Calu3 (cell line): ENCODE measurements at regions of chr7 and their contacts with region 1.

Region 1: GRCh38 chr7:78284945-78285344 is 486.4 kb downstream of the PHTF2 start:
- DNase-seq: no peak
- H3K4me3 Mint-ChIP-seq: no peak overlapping the region
- H3K27ac Mint-ChIP-seq: no peak overlapping the region
- H3K4me1 Mint-ChIP-seq: no peaks in the 10 kb centered on the region
- H3K27me3 Mint-ChIP-seq: peaks cover 23% of the 10 kb centered on the region
- CTCF ChIP-seq: no peak

Region 2: GRCh38 chr7:78379148-78379547 is 94.2 kb after region 1 on chr7:
- CTCF ChIA-PET with region 1: no interaction called
- intact Hi-C with region 1: no loop called
- DNase-seq: no peak
- H3K4me3 Mint-ChIP-seq: no peak overlapping the region
- H3K27ac Mint-ChIP-seq: no peak overlapping the region
- H3K4me1 Mint-ChIP-seq: no peaks in the 10 kb centered on the region
- H3K27me3 Mint-ChIP-seq: no peaks in the 10 kb centered on the region
- CTCF ChIP-seq: no peak

Region 3: GRCh38 chr7:78399033-78399769 is 114.3 kb after region 1 on chr7:
- CTCF ChIA-PET with region 1: interaction called, 10 read pairs
- intact Hi-C with region 1: no loop called
- DNase-seq: no peak
- H3K4me3 Mint-ChIP-seq: no peak overlapping the region
- H3K27ac Mint-ChIP-seq: no peak overlapping the region
- H3K4me1 Mint-ChIP-seq: no peaks in the 10 kb centered on the region
- H3K27me3 Mint-ChIP-seq: no peaks in the 10 kb centered on the region
- CTCF ChIP-seq: no peak